B cell (primary cell): ENCODE measurements at regions of chr6 and their contacts with region 1.

Region 1: GRCh38 chr6:28355743-28356665 is 6.3 kb downstream of the ZKSCAN3 start:
- DNase-seq: peak; percentile 81
- ATAC-seq: peak; percentile 87
- H3K4me3 ChIP-seq: peak overlapping the region; percentile 48 to 70 (median 61)
- H3K4me3 Mint-ChIP-seq: peak overlapping the region; percentile 99
- H3K27ac ChIP-seq: no peak overlapping the region
- H3K27ac Mint-ChIP-seq: peak overlapping the region; percentile 87
- H3K4me1 ChIP-seq: peaks cover 2 to 17% of the 10 kb centered on the region in 2 donors
- H3K4me1 Mint-ChIP-seq: peaks cover 18% of the 10 kb centered on the region
- H3K27me3 ChIP-seq: no peaks in the 10 kb centered on the region
- H3K27me3 Mint-ChIP-seq: no peaks in the 10 kb centered on the region
- CTCF ChIP-seq: peak; percentile 84

Region 2: GRCh38 chr6:27157459-27158315 is 1198.3 kb before region 1 on chr6:
- CTCF ChIA-PET with region 1: interaction called, 11 read pairs
- POLR2A ChIA-PET with region 1: no interaction called
- intact Hi-C with region 1: loop called (anchors 1 kb)
- DNase-seq: peak; percentile 91
- ATAC-seq: peak; percentile 77
- H3K4me3 ChIP-seq: peak overlapping the region; percentile 59 to 91 (median 72)
- H3K4me3 Mint-ChIP-seq: peak overlapping the region; percentile 94
- H3K27ac ChIP-seq: peak overlapping the region; percentile 18 to 45
- H3K27ac Mint-ChIP-seq: peak overlapping the region; percentile 85
- H3K4me1 ChIP-seq: peaks cover 17 to 20% of the 10 kb centered on the region in 2 donors
- H3K4me1 Mint-ChIP-seq: peaks cover 25% of the 10 kb centered on the region
- H3K27me3 ChIP-seq: no peaks in the 10 kb centered on the region
- H3K27me3 Mint-ChIP-seq: no peaks in the 10 kb centered on the region
- CTCF ChIP-seq: peak; percentile 64

Region 3: DNA sequence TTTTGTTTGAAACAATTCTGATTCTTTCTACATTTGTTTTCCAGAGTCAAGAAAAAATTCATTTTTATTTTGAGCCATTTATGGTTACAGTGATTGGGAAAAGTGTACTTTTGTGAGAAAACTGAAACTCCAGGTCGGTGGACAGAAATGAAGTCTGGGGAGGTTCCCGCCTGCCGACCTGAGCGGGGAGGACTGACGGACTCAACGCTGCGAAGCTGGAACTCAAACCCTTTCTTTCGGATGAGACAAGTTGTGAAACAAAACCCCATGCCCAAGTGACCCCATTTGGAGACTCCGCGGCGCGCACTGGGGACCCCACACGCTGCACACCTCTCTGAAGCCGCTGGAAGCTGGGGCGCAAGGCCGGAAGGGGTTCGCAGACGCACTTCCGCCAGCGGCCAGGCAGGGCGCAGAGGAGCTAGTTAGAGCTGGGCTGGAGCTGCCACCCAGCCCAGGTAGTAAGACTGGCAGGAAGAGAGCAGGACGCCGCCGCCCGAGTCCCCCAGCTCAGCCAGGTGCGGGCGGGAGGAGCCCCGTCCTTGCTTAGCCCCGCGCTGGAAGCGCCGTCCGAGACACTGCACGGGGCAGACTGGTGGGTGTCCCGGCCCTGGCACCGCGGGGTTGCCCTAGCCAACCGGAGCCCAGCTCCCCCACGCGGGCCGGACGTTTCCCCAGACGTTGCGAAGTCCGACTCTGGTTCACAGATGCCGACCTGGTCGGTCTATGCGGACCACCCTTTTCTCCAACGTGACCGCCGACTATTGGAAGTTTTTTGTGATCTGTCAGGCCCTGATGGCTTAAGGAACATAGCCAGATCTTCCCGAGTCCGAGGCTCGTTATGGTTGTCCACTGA is 251.4 kb before region 1 on chr6:
- CTCF ChIA-PET with region 1: interaction called, 25 read pairs
- POLR2A ChIA-PET with region 1: no interaction called
- intact Hi-C with region 1: loop called (anchors 1 kb)
- DNase-seq: peak; percentile 92
- ATAC-seq: peak; percentile 97
- H3K4me3 ChIP-seq: peak overlapping the region; percentile 69 to 78 (median 74)
- H3K4me3 Mint-ChIP-seq: peak overlapping the region; percentile 95
- H3K27ac ChIP-seq: peak overlapping the region; percentile 87 to 93
- H3K27ac Mint-ChIP-seq: peak overlapping the region; percentile 96
- H3K4me1 ChIP-seq: peaks cover 5 to 7% of the 10 kb centered on the region in 2 donors
- H3K4me1 Mint-ChIP-seq: peaks cover 13% of the 10 kb centered on the region
- H3K27me3 ChIP-seq: no peaks in the 10 kb centered on the region
- H3K27me3 Mint-ChIP-seq: peaks cover 4% of the 10 kb centered on the region
- CTCF ChIP-seq: peak; percentile 79

Region 4: GRCh38 chr6:28281288-28282064 is 74.5 kb before region 1 on chr6 and contains the start of gene PGBD1:
- CTCF ChIA-PET with region 1: interaction called, 14 read pairs
- POLR2A ChIA-PET with region 1: no interaction called
- intact Hi-C with region 1: no loop called
- DNase-seq: peak; percentile 63
- ATAC-seq: peak; percentile 87
- H3K4me3 ChIP-seq: peak within 1 kb of the TSS; percentile 45 to 61 (median 53)
- H3K4me3 Mint-ChIP-seq: peak within 1 kb of the TSS; percentile 93
- H3K27ac ChIP-seq: no peak within 1 kb of the TSS
- H3K27ac Mint-ChIP-seq: no peak within 1 kb of the TSS
- H3K4me1 ChIP-seq: peaks cover 7 to 9% of the 10 kb centered on the region in 2 donors
- H3K4me1 Mint-ChIP-seq: peaks cover 9% of the 10 kb centered on the region
- H3K27me3 ChIP-seq: peaks cover 0 to 16% (median 11%) of the 10 kb centered on the region in 4 experiments
- H3K27me3 Mint-ChIP-seq: peaks cover 19% of the 10 kb centered on the region
- CTCF ChIP-seq: no peak
- total RNA-seq, gene PGBD1: 1.8 and 2.4 TPM in 2 replicates

Region 5: GRCh38 chr6:28371706-28372451 is 15.9 kb after region 1 on chr6:
- CTCF ChIA-PET with region 1: interaction called, 13 read pairs
- POLR2A ChIA-PET with region 1: no interaction called
- intact Hi-C with region 1: no loop called
- DNase-seq: peak; percentile 57
- ATAC-seq: peak; percentile 78
- H3K4me3 ChIP-seq: no peak overlapping the region
- H3K4me3 Mint-ChIP-seq: peak overlapping the region; percentile 64
- H3K27ac ChIP-seq: peak overlapping the region; percentile 23 to 57
- H3K27ac Mint-ChIP-seq: peak overlapping the region; percentile 93
- H3K4me1 ChIP-seq: peaks cover 22 to 23% of the 10 kb centered on the region in 2 donors
- H3K4me1 Mint-ChIP-seq: peaks cover 24% of the 10 kb centered on the region
- H3K27me3 ChIP-seq: no peaks in the 10 kb centered on the region
- H3K27me3 Mint-ChIP-seq: no peaks in the 10 kb centered on the region
- CTCF ChIP-seq: no peak

Region 6: GRCh38 chr6:28996844-28997510 is 641.0 kb after region 1 on chr6:
- CTCF ChIA-PET with region 1: no interaction called
- POLR2A ChIA-PET with region 1: no interaction called
- intact Hi-C with region 1: no loop called
- DNase-seq: no peak
- ATAC-seq: no peak
- H3K4me3 ChIP-seq: no peak overlapping the region
- H3K4me3 Mint-ChIP-seq: no peak overlapping the region
- H3K27ac ChIP-seq: no peak overlapping the region
- H3K27ac Mint-ChIP-seq: no peak overlapping the region
- H3K4me1 ChIP-seq: no peaks in the 10 kb centered on the region
- H3K4me1 Mint-ChIP-seq: no peaks in the 10 kb centered on the region
- H3K27me3 ChIP-seq: peaks cover 0 to 14% (median 2%) of the 10 kb centered on the region in 4 experiments
- H3K27me3 Mint-ChIP-seq: peaks cover 40% of the 10 kb centered on the region
- CTCF ChIP-seq: no peak